Naive thymus-derived CD4-positive, alpha-beta T cell (primary cell): ENCODE measurements at regions of chr5 and their contacts with region 1.

Region 1: DNA sequence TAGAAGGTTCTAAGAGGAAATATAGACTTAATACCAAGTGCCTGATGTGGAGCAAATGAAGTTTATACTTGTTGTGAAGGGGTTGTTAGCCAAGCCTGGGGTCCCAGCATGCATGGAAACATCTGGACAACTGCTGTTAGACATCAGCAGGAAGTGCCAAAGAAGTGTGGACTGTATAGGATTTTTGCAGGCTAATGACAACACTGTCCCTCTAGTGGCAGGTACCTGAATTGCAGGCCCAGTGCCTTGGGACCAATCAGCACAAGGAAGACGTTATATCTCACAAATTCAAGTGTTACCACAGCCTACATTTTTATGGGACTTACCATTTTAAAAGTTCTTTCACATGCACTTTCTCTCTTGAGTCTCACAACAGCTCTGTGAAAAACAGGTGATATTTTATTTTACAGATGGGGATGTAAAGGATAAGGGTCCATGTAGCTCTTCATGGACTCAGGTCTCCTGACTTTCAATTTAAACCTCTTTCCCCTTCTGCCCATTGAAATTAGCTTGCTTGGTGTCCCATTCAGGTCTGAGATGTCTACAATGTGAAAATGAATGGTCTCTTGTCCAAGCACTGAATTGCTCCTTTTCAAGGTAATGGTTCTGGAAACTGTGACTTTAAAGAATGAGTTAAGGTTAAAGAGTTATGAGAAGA is 89.0 kb upstream of the MAP1B start:
- DNase-seq: peak in 8 of 9 donors; percentile 14 to 55 (median 36)
- ATAC-seq: peak; percentile 72
- H3K4me3 ChIP-seq: no peak overlapping the region
- H3K4me3 Mint-ChIP-seq: no peak overlapping the region
- H3K27ac ChIP-seq: no peak overlapping the region
- H3K27ac Mint-ChIP-seq: no peak overlapping the region
- H3K4me1 ChIP-seq: no peaks in the 10 kb centered on the region
- H3K4me1 Mint-ChIP-seq: peaks cover 0 to 1% (median 0%) of the 10 kb centered on the region in 7 donors
- H3K27me3 ChIP-seq: no peaks in the 10 kb centered on the region
- H3K27me3 Mint-ChIP-seq: peaks cover 4 to 43% (median 34%) of the 10 kb centered on the region in 5 donors

Region 2: DNA sequence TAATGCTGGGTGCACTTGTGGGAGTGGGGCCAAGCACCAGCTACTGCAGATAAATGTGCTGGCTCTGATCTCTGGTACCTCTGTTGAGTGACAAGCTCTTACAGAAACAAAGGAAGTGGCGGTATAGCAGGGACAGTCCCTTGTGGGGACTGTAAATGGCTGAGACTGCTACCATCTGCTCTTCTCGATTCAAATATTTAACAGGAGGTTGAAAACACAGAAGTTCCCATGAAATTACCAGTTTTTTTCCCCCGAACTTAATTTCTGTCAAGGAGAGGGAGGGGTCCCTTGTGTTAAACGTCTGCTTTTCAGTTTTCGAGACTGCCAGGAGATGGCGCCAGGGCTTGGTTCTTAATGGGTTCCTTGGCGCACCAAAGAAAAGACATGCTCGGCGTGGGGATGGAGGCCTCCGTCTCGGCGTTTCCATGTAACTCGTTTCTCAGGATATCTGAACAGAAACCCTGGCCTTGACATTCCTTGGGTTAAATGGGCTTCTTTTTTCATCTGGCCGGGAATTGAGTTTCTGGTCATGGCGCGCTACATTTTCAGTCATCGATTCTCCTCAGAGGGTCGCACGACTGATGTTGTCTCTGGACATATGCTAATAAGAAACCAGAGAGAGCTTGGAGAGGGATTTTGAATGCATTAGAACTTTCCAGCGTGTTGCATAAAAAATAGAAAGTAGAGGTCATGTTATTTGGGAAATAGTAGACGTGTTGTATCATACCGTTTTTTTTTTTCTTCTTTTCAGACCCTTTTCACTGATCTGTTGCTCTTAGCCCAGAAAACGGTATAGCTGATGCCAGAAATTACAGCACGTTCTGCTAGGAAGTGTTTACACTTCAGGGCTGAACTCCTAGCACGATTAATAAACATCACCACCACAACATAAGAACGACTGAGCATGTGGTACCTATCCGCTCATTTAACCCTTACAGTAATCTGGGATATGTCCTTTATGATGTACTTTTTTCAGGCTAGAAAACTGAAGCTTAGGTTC is 235.2 kb before region 1 on chr5:
- CTCF ChIA-PET with region 1: no interaction called
- POLR2A ChIA-PET with region 1: no interaction called
- intact Hi-C with region 1: loop called (anchors 5 to 10 kb)
- DNase-seq: peak in 5 of 9 donors; percentile 7 to 44 (median 9)
- ATAC-seq: peak; percentile 71
- H3K4me3 ChIP-seq: peak overlapping the region; percentile 19
- H3K4me3 Mint-ChIP-seq: peak overlapping the region in 9 of 10 donors; percentile 11 to 71 (median 57)
- H3K27ac ChIP-seq: no peak overlapping the region
- H3K27ac Mint-ChIP-seq: peak overlapping the region in 2 of 9 donors; percentile 25 to 38
- H3K4me1 ChIP-seq: peaks cover 0 to 7% of the 10 kb centered on the region in 2 donors
- H3K4me1 Mint-ChIP-seq: peaks cover 6 to 23% (median 15%) of the 10 kb centered on the region in 7 donors
- H3K27me3 ChIP-seq: no peaks in the 10 kb centered on the region
- H3K27me3 Mint-ChIP-seq: peaks cover 8 to 17% (median 9%) of the 10 kb centered on the region in 5 donors